ENCODE measurements at regions of chr2 and their contacts with region 1.

Region 1: GRCh38 chr2:177155631-177156030 is 57.0 kb upstream of the HNRNPA3 start:
- DNase-seq: no peak
- CTCF ChIP-seq: no peak

Region 2: DNA sequence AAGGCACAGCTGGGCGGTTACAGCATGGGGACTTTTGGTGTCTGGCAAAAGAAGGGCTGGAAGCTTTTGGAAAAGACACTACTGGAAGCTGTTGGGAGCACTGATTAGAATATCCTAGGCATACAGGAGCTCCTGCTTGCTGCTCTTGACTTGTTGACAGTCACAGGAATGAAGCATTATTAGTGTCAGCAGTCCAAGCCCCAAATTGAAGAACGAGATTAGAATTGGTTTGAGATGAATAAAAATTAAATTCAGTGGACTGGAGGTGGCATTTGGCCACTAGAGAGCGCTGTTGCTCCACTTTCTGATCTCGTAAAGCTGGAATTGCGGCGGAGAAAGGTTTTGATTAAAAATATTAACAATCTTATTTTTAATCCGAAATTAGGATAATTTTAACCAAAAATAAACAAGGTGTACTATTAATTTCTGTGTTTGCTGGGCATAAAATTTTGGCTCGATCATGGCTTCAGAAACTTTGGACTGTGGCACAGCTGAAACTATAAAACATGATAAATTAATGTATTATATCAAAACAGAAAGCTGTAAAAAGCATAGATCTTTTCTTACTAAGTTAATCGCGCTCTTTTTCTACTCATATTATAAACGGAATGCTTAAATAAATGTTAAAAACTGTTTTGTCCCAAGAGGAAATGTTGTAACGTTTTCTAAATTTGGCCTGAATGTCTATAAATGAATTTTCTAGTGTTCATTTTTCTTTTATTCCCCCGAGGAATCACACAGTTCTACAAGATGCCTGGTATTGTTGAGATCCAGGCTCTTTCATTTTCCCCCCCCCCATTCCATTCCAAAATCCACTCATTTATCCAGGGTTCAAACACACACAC is 1028.5 kb before region 1 on chr2:
- in situ Hi-C with region 1: loop called (anchors 10 kb)
- DNase-seq: peak; percentile 62
- CTCF ChIP-seq: peak; percentile 85

Region 3: DNA sequence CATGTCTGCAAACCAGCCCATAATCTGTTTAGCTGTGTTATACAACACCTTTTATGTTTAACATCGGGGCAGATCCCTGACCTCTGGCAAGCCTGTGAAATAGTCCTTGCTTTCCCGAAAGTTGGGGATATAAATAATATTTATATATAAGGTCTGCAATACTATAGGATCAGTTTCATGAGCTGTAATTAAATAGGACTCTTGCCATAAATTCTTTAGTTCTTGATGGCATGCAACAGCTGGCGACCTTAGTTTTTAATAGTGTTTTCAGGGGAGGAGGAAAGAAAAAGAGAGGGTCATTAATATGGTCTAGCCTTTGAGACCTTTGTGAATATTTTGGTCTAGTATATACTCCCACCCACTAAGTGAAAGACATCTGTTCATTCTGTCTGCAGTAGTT is 719.9 kb before region 1 on chr2:
- in situ Hi-C with region 1: no loop called
- DNase-seq: no peak
- CTCF ChIP-seq: no peak

Region 4: GRCh38 chr2:176821345-176821744 is 334.3 kb before region 1 on chr2:
- in situ Hi-C with region 1: loop called (anchors 10 kb)
- DNase-seq: no peak
- CTCF ChIP-seq: no peak

Region 5: DNA sequence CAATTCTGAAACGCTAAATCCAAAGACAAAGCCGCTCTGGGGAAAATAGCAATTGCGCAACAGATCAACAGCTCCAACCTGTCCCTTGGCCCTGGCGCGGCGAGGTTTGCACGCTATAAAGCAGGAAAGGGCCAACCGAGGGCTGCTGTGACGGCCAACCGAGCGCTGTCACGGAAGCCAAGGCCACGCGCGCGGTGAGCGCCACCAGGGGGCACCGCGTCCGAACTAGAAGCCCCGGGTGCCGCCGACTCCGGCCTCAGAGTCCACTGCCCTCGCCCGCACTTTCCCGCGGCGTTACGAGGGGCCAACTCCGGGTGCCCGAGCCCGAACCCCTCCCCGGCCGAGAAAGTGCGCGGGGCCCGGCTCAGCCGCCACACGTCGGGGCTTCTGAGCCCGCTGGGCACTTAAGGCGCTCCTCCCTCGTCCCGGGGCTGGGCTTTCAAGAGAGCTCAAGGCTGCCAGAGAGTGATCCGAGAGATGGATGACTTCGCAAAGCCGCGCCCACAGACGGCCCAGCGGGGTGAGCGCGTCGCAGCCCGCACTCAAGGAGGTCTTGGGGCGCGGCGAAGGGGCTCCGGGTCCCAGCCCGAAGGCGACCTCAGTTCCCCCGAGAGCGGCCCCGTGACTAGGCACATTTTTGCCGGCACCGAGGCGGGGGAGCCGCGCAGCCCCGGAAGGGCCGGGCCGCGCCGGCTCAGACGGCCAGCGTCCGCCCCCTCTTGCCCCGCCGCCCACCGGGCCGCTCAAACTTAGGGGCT is 108.0 kb after region 1 on chr2:
- in situ Hi-C with region 1: no loop called
- DNase-seq: peak; percentile 84
- CTCF ChIP-seq: peak; percentile 85

Region 6: GRCh38 chr2:177595126-177595845 is 439.7 kb after region 1 on chr2:
- in situ Hi-C with region 1: no loop called
- DNase-seq: no peak
- CTCF ChIP-seq: no peak

Measured in GM13976 (cell line).